Activated CD8-positive, alpha-beta T cell treated with anti-CD3 and anti-CD28 coated beads, Interleukin-2, amount 10 ng/mL, durations not matched to agents 7 days and 5 days (primary cell): ENCODE measurements at regions of chr1 and their contacts with region 1.

Region 1: GRCh38 chr1:7207875-7208646 is 422.8 kb downstream of the CAMTA1 start:
- DNase-seq: peak; percentile 50
- ATAC-seq: peak; percentile 57
- H3K4me3 Mint-ChIP-seq: no peak overlapping the region
- H3K27ac Mint-ChIP-seq: no peak overlapping the region
- H3K4me1 Mint-ChIP-seq: no peaks in the 10 kb centered on the region
- H3K27me3 Mint-ChIP-seq: peaks cover 11% of the 10 kb centered on the region

Region 2: GRCh38 chr1:6724516-6725141 is 483.4 kb before region 1 on chr1:
- CTCF ChIA-PET with region 1: interaction called, 12 read pairs
- POLR2A ChIA-PET with region 1: no interaction called
- DNase-seq: no peak
- ATAC-seq: no peak
- H3K4me3 Mint-ChIP-seq: no peak overlapping the region
- H3K27ac Mint-ChIP-seq: no peak overlapping the region
- H3K4me1 Mint-ChIP-seq: no peaks in the 10 kb centered on the region
- H3K27me3 Mint-ChIP-seq: no peaks in the 10 kb centered on the region

Region 3: GRCh38 chr1:7042322-7043190 is 165.5 kb before region 1 on chr1:
- CTCF ChIA-PET with region 1: interaction called, 19 read pairs
- POLR2A ChIA-PET with region 1: no interaction called
- DNase-seq: no peak
- ATAC-seq: no peak
- H3K4me3 Mint-ChIP-seq: no peak overlapping the region
- H3K27ac Mint-ChIP-seq: no peak overlapping the region
- H3K4me1 Mint-ChIP-seq: no peaks in the 10 kb centered on the region
- H3K27me3 Mint-ChIP-seq: no peaks in the 10 kb centered on the region